HCT116 (cell line): ENCODE measurements at regions of chr11 and their contacts with region 1.

Region 1: DNA sequence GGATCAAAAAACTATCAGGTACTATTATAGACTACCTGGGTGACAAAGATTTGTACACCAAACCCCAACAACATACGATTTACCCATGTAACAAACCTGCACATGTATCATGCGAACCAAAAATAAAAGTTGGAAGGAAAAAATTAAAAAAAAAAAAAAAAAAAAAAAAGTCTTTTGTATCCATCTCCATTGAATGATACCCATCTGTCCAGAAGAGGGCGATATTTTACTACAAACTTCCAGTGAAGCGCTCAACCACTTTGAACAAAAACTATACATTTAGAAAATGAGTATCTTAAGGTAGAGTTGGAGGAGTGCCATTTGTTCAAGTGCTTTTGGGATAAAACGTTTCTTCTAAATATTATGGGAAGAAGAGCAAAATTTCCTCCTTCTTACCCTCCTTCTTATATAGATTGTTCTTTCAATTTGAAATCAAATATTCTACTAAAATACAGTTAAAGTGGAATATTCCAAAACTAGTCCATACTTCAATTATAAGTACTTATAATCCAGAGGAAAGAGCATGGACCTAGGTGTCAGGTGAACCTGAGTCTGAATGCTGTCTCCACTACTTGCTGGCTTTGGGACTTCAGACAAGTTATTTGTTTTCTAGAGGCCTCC is 23.3 kb downstream of the ARL14EP start:
- DNase-seq: peak; percentile 15
- ATAC-seq: peak; percentile 62; the same call in 1 of the 2 replicates
- H3K4me3 ChIP-seq: no peak overlapping the region
- H3K27ac ChIP-seq: no peak overlapping the region
- H3K4me1 ChIP-seq: no peaks in the 10 kb centered on the region
- H3K27me3 ChIP-seq: peaks cover 10% of the 10 kb centered on the region; the same call in 1 of the 2 replicates
- CTCF ChIP-seq: peak; percentile 46 to 64 (median 52); a peak in 5 of 6 replicates
- POLR2A ChIP-seq: no peak
- RAD21 ChIP-seq: peak; percentile 67

Region 2: GRCh38 chr11:30635401-30635989 is 289.3 kb after region 1 on chr11:
- CTCF ChIA-PET with region 1: no interaction called
- POLR2A ChIA-PET with region 1: no interaction called
- RAD21 ChIA-PET with region 1: no interaction called
- intact Hi-C with region 1: no loop called
- DNase-seq: no peak
- ATAC-seq: no peak
- H3K4me3 ChIP-seq: no peak overlapping the region
- H3K27ac ChIP-seq: no peak overlapping the region
- H3K4me1 ChIP-seq: no peaks in the 10 kb centered on the region
- H3K27me3 ChIP-seq: peaks cover 31% of the 10 kb centered on the region
- CTCF ChIP-seq: no peak
- POLR2A ChIP-seq: no peak
- RAD21 ChIP-seq: no peak

Region 3: GRCh38 chr11:30855383-30856006 is 509.3 kb after region 1 on chr11:
- CTCF ChIA-PET with region 1: no interaction called
- POLR2A ChIA-PET with region 1: no interaction called
- RAD21 ChIA-PET with region 1: no interaction called
- intact Hi-C with region 1: loop called (anchors 1 kb)
- DNase-seq: no peak
- ATAC-seq: no peak
- H3K4me3 ChIP-seq: no peak overlapping the region
- H3K27ac ChIP-seq: no peak overlapping the region
- H3K4me1 ChIP-seq: no peaks in the 10 kb centered on the region
- H3K27me3 ChIP-seq: peaks cover 16% of the 10 kb centered on the region
- CTCF ChIP-seq: peak; percentile 8 to 50 (median 20); a peak in 3 of 6 replicates
- POLR2A ChIP-seq: no peak
- RAD21 ChIP-seq: peak; percentile 44

Region 4: DNA sequence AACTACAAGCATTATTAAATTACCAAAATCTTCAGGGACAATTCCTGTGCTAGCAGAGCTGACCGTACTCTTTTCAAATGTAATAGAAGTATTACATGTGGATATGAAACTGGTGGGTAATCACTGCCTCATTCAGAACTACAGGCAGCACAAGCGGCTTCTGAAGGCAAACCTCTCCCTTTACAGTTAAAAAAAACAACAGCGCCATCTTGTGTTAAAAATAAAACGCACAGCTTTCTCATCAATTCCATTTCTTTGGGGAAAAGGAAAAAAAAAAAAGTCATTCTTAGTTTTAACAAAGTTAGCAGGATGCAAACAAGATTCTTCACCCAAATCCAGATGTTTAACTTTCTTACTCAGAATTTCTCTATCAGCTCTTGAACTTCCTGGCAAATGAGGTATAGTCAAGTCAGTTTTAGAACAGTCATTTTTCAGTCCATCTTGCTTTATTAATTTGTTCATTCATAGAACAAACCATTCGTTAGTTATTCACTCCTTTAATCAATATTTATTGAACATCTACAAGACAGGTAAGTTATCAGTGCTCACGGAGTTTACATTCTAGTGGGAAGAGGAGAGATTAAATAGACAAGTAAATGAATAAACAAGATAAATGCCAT is 571.8 kb after region 1 on chr11:
- CTCF ChIA-PET with region 1: interaction called, 4 read pairs
- POLR2A ChIA-PET with region 1: no interaction called
- RAD21 ChIA-PET with region 1: no interaction called
- intact Hi-C with region 1: loop called (anchors 1 kb)
- DNase-seq: peak; percentile 27
- ATAC-seq: peak; percentile 70
- H3K4me3 ChIP-seq: no peak overlapping the region
- H3K27ac ChIP-seq: no peak overlapping the region
- H3K4me1 ChIP-seq: no peaks in the 10 kb centered on the region
- H3K27me3 ChIP-seq: peaks cover 51% of the 10 kb centered on the region
- CTCF ChIP-seq: peak; percentile 36 to 70 (median 38); a peak in 4 of 6 replicates
- POLR2A ChIP-seq: no peak
- RAD21 ChIP-seq: peak; percentile 58